H1 (cell line): ENCODE measurements at regions of chr22 and their contacts with region 1.

Region 1: DNA sequence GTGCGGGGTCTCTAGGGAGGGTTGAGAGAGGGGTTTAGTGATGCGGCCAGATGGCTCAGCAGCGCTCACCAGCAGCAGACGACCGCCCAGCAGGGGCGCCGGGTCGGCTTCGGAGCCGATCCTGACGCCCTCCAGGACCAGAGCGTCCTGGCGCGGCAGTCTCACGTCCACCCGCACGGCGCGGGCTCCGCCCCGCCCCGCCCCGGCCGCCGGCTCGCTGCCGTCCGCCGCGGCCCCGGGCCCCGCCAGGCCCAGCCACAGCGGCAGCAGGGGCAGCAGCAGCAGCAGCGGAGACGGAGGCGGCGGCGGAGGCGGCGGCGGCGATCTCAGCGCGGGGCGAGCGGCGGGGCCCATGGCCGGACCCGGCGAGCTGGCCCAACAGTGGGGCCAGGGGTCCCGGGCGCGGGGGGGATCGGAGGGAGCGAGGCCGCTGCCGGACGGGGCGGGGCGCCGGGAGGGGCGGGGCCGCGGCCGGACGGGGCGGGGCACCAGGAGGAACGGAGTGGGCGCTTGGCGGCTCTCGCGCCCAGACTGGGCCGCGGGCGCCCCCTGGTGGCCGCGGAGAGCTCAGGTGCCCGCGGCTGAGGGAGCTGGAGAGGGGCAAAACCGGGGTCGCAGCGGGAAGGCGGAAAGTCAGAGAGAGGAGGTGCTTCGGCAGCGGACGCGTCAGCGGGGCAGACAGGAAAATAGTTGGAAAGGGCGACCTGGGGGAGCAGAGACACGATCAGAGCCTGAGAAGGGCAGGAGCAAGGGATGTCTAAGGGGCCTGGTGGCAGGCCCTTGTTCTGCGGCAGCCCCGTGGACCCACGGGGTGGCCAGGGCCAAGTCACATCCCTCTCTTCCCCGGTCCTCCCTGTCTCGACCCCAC is at the start of gene RNF215:
- DNase-seq: peak; percentile 77 to 95
- H3K4me3 ChIP-seq: peak within 1 kb of the TSS; percentile 42 to 66 (median 54)
- H3K27ac ChIP-seq: no peak within 1 kb of the TSS
- H3K4me1 ChIP-seq: peaks cover 0 to 7% (median 2%) of the 10 kb centered on the region in 4 experiments; a peak in 4 of 7 replicates
- H3K27me3 ChIP-seq: no peaks in the 10 kb centered on the region
- CTCF ChIP-seq: peak; percentile 79 to 92 (median 79)
- EP300 ChIP-seq: no peak
- POLR2A ChIP-seq: no peak
- RAD21 ChIP-seq: peak; percentile 78 to 86
- total RNA-seq, gene RNF215: 15.3 and 19.0 TPM in 2 replicates

Region 2: DNA sequence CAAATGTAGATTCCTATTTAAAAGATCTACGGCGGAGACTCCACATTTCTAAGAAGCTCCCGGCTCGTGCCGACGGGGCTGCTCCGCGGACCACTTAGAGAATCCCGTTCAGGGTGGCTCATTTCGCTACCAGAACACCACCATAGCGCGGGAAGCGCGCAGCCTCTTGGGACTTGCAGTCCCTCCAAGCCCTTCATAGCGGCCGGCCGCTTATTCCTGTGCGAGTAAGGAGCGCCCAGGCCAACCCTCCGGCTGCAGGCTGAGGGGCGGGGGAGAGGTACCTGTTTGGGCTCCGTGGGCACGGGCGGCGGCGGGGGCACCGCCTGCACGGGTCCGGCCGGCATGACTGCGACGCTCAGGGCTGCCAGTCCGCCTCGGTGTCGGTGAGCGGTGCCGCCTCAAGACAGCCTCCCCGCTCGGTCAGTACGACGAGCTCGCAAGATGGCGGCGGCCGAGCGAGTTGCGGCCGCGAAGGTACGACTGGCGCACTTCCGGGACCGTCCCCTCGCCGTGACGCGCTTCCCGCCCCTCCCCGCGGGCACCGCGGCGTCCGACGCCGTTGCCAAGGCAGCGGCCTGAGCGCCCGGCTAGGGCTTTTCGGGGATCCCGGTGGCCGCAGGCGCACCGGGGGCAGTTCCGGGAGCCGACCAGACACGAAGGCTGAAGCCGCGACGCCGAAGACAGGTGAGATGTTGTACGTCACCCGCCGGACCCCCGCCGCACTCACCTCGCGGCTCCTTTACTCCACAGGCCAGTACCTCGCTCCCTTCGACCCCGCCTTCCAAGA is 30.6 kb before region 1 on chr22 and contains the starts of genes CCDC157 and SF3A1:
- CTCF ChIA-PET with region 1: interaction called, 6 read pairs
- POLR2A ChIA-PET with region 1: interaction called, 11 read pairs
- DNase-seq: peak; percentile 72 to 91
- H3K4me3 ChIP-seq: peak within 1 kb of the TSS; percentile 78 to 93 (median 91)
- H3K27ac ChIP-seq: peak within 1 kb of the TSS; percentile 93
- H3K4me1 ChIP-seq: peaks cover 2 to 11% (median 4%) of the 10 kb centered on the region in 4 experiments; a peak in 6 of 7 replicates
- H3K27me3 ChIP-seq: no peaks in the 10 kb centered on the region
- CTCF ChIP-seq: no peak
- EP300 ChIP-seq: peak in 1 of 2 experiments; percentile 5; a peak in 1 of 3 replicates
- POLR2A ChIP-seq: peak; percentile 87 to 98
- RAD21 ChIP-seq: no peak
- total RNA-seq, gene CCDC157: 4.1 and 4.8 TPM in 2 replicates
- total RNA-seq, gene SF3A1: 275 and 285 TPM in 2 replicates

Region 3: DNA sequence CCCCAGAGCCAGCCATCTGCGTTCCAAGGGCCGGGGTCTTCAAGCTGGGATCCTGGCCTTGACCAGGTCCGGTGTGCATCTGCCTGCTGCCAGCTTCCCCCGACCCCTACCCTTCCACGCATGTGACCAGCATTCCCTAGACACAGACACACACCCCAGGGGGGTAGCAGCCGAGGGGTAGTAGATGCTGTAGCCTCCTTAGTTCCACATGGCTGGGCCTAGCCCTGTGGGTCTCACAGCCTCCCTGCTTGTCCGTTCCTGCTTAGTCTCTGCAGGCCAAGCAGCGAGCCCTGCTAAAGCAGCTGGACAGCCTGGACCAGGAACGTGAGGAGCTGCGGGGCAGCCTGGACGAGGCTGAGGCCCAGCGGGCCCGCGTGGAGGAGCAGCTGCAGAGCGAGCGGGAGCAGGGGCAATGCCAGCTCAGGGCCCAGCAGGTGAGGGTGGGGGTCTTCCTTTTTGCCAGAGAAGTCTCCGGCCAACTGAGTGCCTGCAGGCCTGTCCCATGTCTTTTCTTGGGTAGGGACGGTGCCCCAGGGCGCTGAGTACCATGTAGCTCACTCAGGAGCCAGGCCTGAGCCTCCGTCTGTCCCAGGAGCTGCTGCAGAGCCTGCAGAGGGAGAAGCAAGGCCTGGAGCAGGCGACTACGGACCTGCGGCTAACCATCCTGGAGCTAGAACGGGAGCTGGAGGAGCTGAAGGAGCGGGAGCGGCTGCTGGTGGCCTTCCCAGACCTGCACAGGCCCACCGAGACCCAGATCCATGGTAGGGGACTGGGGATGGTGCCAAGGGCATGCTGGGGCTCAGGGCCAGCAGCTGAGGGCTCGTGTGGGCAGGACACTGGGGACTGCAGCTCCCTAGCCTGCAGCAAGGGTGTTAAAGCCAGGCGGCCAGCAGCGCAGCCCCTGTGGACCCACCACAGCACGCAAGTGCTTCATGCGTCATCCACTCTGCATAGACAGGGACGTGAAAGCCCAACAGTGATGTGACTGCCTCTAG is 13.6 kb before region 1 on chr22:
- CTCF ChIA-PET with region 1: interaction called, 28 read pairs
- POLR2A ChIA-PET with region 1: interaction called, 14 read pairs
- DNase-seq: no peak
- H3K4me3 ChIP-seq: no peak overlapping the region
- H3K27ac ChIP-seq: peak overlapping the region; percentile 61; the same call in 1 of the 2 replicates
- H3K4me1 ChIP-seq: peaks cover 0 to 2% (median 0%) of the 10 kb centered on the region in 4 experiments; a peak in 1 of 7 replicates
- H3K27me3 ChIP-seq: no peaks in the 10 kb centered on the region; a peak in 1 of 7 replicates
- CTCF ChIP-seq: no peak
- EP300 ChIP-seq: no peak
- POLR2A ChIP-seq: no peak
- RAD21 ChIP-seq: no peak

Region 4: GRCh38 chr22:30402028-30402765 is 15.0 kb after region 1 on chr22:
- CTCF ChIA-PET with region 1: interaction called, 15 read pairs
- POLR2A ChIA-PET with region 1: interaction called, 7 read pairs
- DNase-seq: no peak
- H3K4me3 ChIP-seq: 0 out of 8 replicates have a peak overlapping the region, but pooled peaks of 1 of the 4 experiments have one; percentile 5
- H3K27ac ChIP-seq: no peak overlapping the region; the same call in 1 of the 2 replicates
- H3K4me1 ChIP-seq: peaks cover 4 to 12% (median 10%) of the 10 kb centered on the region in 4 experiments
- H3K27me3 ChIP-seq: peaks cover 0 to 16% (median 7%) of the 10 kb centered on the region in 4 experiments; a peak in 4 of 7 replicates
- CTCF ChIP-seq: no peak
- EP300 ChIP-seq: no peak
- POLR2A ChIP-seq: no peak
- RAD21 ChIP-seq: no peak

Region 5: GRCh38 chr22:30413745-30414524 is 26.7 kb after region 1 on chr22:
- CTCF ChIA-PET with region 1: interaction called, 12 read pairs
- POLR2A ChIA-PET with region 1: interaction called, 3 read pairs
- DNase-seq: no peak
- H3K4me3 ChIP-seq: no peak overlapping the region
- H3K27ac ChIP-seq: no peak overlapping the region
- H3K4me1 ChIP-seq: no peaks in the 10 kb centered on the region
- H3K27me3 ChIP-seq: no peaks in the 10 kb centered on the region
- CTCF ChIP-seq: no peak
- EP300 ChIP-seq: no peak
- POLR2A ChIP-seq: no peak
- RAD21 ChIP-seq: no peak